ENCODE measurements at regions of chr2 and their contacts with region 1.

Region 1: DNA sequence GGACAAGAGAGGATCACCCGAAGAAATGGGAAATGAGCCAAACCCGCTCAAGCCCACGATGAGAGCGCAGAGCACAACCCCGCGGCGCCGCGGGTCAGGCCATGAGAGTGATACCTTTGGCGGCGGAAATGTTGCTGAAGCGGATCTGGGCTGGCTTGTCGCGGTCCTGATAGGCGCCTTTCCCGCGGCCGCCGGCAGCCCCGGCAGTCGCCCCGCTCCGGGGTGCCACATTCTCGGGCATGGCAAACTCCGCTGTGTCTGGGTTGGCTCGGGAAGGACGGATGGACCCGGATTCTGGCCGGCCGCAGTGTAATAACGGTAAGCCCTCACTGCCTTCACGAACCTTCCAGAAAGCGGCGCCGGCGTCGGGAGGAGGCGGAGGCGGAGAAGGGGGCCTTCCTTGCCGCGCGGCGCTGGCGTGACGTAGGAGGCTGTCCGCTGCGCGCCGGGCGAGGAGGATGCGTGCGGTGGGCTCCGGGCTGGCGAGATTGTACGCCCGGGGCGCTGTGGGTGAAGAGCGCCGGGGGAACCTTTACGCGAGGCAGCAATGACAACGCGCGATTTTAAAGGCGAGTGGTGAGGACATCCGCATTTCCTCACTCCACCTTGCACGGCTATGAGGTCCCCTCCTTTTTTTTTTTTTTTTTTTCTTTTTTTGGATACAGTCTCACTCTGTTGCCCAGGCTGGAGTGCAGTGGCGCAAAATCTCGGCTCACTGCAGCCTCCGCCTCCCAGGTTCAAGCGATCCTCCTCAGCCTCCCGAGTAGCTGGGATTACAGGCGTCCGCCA is at the start of gene CCT4:
- DNase-seq: peak; percentile 64 to 90
- H3K4me3 ChIP-seq: peak within 1 kb of the TSS; percentile 97
- H3K27ac ChIP-seq: peak within 1 kb of the TSS; percentile 94
- H3K4me1 ChIP-seq: peaks cover 30% of the 10 kb centered on the region
- H3K27me3 ChIP-seq: no peaks in the 10 kb centered on the region
- CTCF ChIP-seq: no peak
- total RNA-seq, gene CCT4: 265 and 350 TPM in 2 replicates

Region 2: DNA sequence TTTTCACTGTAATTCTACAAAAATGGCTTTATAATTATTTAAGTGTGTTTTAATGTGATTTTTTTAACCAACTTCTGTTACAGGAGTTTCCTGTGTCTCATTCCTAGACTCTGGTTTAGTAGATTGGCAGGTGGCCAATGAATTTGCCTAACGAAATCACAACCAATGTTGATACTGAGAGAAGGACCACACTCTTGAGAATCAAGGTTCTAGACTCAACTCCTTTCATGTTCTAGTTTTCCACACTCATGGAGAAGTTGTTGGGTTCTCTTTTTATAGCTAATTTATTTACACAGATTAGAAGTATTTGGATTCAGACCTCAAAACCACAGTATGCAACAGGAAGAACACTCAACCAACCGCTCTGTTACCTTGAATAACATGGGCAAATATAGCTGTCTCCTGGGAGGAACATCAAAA is 394.9 kb before region 1 on chr2:
- CTCF ChIA-PET with region 1: no interaction called
- POLR2A ChIA-PET with region 1: no interaction called
- intact Hi-C with region 1: loop called (anchors 10 kb)
- DNase-seq: no peak
- H3K4me3 ChIP-seq: no peak overlapping the region
- H3K27ac ChIP-seq: peak overlapping the region; percentile 3; the same call in 1 of the 2 replicates
- H3K4me1 ChIP-seq: no peaks in the 10 kb centered on the region
- H3K27me3 ChIP-seq: no peaks in the 10 kb centered on the region
- CTCF ChIP-seq: no peak

Region 3: GRCh38 chr2:61854474-61855182 is 33.8 kb before region 1 on chr2:
- CTCF ChIA-PET with region 1: interaction called, 8 read pairs
- POLR2A ChIA-PET with region 1: interaction called, 3 read pairs
- intact Hi-C with region 1: loop called (anchors 1 kb)
- DNase-seq: peak; percentile 92 to 96
- H3K4me3 ChIP-seq: peak overlapping the region; percentile 86
- H3K27ac ChIP-seq: peak overlapping the region; percentile 49
- H3K4me1 ChIP-seq: peaks cover 14% of the 10 kb centered on the region
- H3K27me3 ChIP-seq: no peaks in the 10 kb centered on the region
- CTCF ChIP-seq: no peak; the same call in 1 of the 2 replicates

Region 4: GRCh38 chr2:61905372-61906185 is 17.1 kb after region 1 on chr2 and contains the start of gene COMMD1:
- CTCF ChIA-PET with region 1: no interaction called
- POLR2A ChIA-PET with region 1: no interaction called
- intact Hi-C with region 1: no loop called
- DNase-seq: peak; percentile 68 to 69
- H3K4me3 ChIP-seq: peak within 1 kb of the TSS; percentile 82
- H3K27ac ChIP-seq: no peak within 1 kb of the TSS
- H3K4me1 ChIP-seq: peaks cover 20% of the 10 kb centered on the region
- H3K27me3 ChIP-seq: no peaks in the 10 kb centered on the region
- CTCF ChIP-seq: no peak
- total RNA-seq, gene COMMD1: 16.3 and 20.9 TPM in 2 replicates

Region 5: DNA sequence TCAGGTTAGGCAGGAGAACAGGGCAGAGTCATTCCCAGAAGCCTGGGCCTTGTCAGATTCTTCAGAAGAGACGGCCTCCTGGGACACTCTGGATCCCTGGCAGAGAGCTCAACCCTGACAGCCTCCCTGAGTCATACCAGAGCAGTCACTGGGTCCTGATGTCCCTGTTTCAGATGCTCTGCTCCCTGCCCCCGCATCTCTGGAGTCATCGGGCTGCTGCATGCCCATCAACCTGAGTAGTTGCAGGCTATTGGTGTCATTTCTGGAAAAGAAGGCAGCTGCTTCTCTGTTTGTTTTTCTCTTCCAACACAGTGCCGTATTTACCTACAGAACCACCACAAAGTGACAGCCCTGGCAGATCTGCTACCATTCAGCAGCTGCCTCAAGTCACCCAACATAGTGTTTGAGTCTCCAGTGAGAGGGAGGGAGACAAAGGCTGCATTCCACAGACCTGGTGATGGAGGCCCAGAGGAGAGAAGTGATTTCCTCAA is 452.6 kb after region 1 on chr2:
- CTCF ChIA-PET with region 1: interaction called, 11 read pairs
- POLR2A ChIA-PET with region 1: no interaction called
- intact Hi-C with region 1: no loop called
- DNase-seq: peak; percentile 38 to 42
- H3K4me3 ChIP-seq: no peak overlapping the region
- H3K27ac ChIP-seq: no peak overlapping the region
- H3K4me1 ChIP-seq: peaks cover 22% of the 10 kb centered on the region
- H3K27me3 ChIP-seq: no peaks in the 10 kb centered on the region
- CTCF ChIP-seq: no peak

Measured in PC-9 (cell line).